ENCODE measurements at regions of chr1 and their contacts with region 1.

Region 1: GRCh38 chr1:156591432-156592157 is at the start of gene NAXE:
- DNase-seq: peak; percentile 93
- total RNA-seq, gene NAXE: 91.4 TPM

Region 2: DNA sequence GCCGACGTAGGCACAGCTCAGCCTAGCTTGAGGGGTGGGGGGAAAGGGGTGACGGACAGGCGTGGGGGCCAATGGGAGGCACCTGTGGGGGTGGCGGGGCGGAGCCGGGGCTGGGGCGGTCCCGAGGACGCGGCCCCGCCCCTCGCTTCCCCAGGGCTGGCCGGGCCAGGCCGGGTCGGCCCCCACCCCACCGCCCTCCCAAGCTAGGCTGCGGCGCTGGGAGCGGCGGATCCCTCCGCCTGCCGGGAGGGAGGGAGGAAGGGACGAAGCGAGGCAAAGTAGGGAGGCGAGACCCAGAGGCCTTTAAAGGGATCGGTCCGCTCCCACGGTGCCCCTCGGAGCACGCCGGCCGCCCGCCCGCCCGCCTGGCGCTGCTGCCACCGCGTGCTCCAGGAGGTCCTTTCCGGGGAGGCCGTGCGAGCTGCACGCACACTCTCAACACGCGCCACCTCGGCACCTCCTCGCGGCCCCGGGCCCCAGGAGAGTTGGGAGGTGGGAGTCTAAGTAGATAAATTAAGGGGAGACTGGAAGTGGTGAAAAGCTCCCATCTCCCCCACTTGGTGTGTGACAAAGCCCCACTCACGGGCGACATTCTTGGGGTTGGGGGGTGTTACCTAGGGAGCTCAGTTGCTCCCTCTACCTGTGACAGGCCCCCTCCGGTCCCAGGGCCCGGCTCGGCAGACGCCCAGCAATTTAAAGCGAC is 90.6 kb before region 1 on chr1:
- intact Hi-C with region 1: loop called (anchors 5 kb)
- DNase-seq: peak; percentile 98